ENCODE measurements at regions of chr5 and their contacts with region 1.

Region 1: GRCh38 chr5:75236322-75237316 is at the start of gene ANKRD31:
- DNase-seq: peak; percentile 88
- ATAC-seq: peak; percentile 99
- H3K4me3 Mint-ChIP-seq: peak within 1 kb of the TSS; percentile 86
- H3K27ac Mint-ChIP-seq: peak within 1 kb of the TSS; percentile 94
- H3K4me1 Mint-ChIP-seq: peaks cover 19% of the 10 kb centered on the region
- H3K27me3 Mint-ChIP-seq: no peaks in the 10 kb centered on the region
- total RNA-seq, gene ANKRD31: 0.26 to 0.28 TPM

Region 2: DNA sequence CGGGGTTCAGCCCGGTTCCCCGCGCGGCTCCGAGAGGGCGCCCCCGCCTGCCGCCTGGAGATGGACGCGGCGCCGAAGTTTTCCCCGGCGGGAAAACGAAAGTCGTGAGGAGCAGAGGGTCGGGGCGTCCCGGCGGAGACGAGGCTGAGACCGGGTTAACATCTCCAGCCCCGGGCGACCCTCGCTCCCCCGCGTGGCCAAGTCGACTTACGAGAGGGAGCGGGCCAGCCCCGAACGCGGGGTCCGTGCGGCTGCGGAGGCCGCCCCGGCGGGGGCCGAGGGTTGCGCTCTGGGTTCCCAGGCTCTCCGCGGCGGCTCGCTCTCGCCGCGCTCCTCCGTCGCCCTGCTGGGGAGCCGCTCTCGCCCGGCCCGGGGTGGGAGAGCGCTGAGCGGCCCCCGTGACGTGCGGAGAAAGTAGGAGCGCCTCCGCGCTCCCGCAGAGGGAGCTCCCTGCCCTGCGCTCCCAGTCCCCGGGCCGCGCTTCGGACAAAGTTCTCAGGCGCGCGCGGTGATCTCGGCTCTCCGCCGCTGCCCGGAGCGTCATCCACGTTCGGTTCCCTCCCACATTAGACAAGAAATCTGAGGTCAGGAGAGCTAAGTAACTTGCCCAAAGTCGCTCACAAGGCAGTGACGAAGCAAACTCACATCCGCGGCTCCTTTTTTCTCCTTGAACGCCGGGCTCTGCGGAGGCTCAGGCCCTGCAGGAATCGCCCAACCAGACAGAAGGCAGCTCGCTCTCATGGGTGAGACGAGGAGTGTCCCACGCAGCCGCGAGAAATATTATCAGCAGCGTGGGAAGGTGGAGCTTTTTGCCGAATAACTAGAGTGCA is 183.1 kb before region 1 on chr5:
- CTCF ChIA-PET with region 1: interaction called, 22 read pairs
- DNase-seq: peak; percentile 58
- ATAC-seq: peak; percentile 50
- H3K4me3 Mint-ChIP-seq: peak overlapping the region; percentile 78
- H3K27ac Mint-ChIP-seq: peak overlapping the region; percentile 44
- H3K4me1 Mint-ChIP-seq: peaks cover 56% of the 10 kb centered on the region
- H3K27me3 Mint-ChIP-seq: peaks cover 44% of the 10 kb centered on the region

Region 3: GRCh38 chr5:75331095-75332090 is 94.8 kb after region 1 on chr5:
- CTCF ChIA-PET with region 1: interaction called, 23 read pairs
- DNase-seq: no peak
- ATAC-seq: no peak
- H3K4me3 Mint-ChIP-seq: no peak overlapping the region
- H3K27ac Mint-ChIP-seq: no peak overlapping the region
- H3K4me1 Mint-ChIP-seq: no peaks in the 10 kb centered on the region
- H3K27me3 Mint-ChIP-seq: peaks cover 4% of the 10 kb centered on the region

Region 4: DNA sequence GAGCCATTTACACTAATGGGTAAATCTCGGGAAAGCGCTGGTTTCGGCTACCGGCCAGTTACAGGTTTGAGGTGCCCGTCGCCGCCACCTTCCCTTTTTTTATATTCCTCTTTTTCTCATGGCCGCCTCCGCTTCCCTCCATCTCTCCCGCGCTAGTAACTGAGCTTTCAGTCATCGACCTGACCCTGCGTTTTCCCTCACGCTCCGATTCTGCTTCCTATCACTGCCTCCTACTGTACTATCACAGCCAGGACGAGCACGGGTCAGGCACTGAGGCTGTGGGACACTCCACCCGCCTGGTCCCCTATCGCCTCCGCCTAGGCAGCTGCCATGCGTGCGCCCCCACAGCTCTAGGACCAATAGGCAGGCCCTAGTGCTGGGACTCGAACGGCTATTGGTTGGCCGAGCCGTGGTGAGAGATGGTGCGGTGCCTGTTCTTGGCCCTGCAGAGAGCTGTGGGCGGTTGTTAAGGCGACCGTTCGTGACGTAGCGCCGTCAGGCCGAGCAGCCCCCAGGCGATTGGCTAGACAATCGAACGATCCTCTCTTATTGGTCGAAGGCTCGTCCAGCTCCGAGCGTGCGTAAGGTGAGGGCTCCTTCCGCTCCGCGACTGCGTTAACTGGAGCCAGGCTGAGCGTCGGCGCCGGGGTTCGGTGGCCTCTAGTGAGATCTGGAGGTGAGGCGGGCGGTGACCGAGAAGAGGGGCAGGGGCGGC is 100.2 kb after region 1 on chr5 and contains the start of gene HMGCR:
- CTCF ChIA-PET with region 1: interaction called, 23 read pairs
- DNase-seq: peak; percentile 99
- ATAC-seq: peak; percentile 97
- H3K4me3 Mint-ChIP-seq: no peak within 1 kb of the TSS
- H3K27ac Mint-ChIP-seq: no peak within 1 kb of the TSS
- H3K4me1 Mint-ChIP-seq: peaks cover 33% of the 10 kb centered on the region
- H3K27me3 Mint-ChIP-seq: no peaks in the 10 kb centered on the region
- total RNA-seq, gene HMGCR: 69.5 to 99.8 TPM

Region 5: GRCh38 chr5:75381456-75381855 is 144.8 kb after region 1 on chr5:
- CTCF ChIA-PET with region 1: no interaction called
- DNase-seq: no peak
- ATAC-seq: no peak
- H3K4me3 Mint-ChIP-seq: no peak overlapping the region
- H3K27ac Mint-ChIP-seq: no peak overlapping the region
- H3K4me1 Mint-ChIP-seq: no peaks in the 10 kb centered on the region
- H3K27me3 Mint-ChIP-seq: no peaks in the 10 kb centered on the region

Region 6: GRCh38 chr5:75681125-75681830 is 444.7 kb after region 1 on chr5:
- CTCF ChIA-PET with region 1: interaction called, 20 read pairs
- DNase-seq: no peak
- ATAC-seq: no peak
- H3K4me3 Mint-ChIP-seq: no peak overlapping the region
- H3K27ac Mint-ChIP-seq: no peak overlapping the region
- H3K4me1 Mint-ChIP-seq: peaks cover 8% of the 10 kb centered on the region
- H3K27me3 Mint-ChIP-seq: no peaks in the 10 kb centered on the region